Activated CD4-positive, alpha-beta memory T cell treated with anti-CD3 and anti-CD28 coated beads for 36 hours (primary cell): ENCODE measurements at regions of chr3 and their contacts with region 1.

Region 1: DNA sequence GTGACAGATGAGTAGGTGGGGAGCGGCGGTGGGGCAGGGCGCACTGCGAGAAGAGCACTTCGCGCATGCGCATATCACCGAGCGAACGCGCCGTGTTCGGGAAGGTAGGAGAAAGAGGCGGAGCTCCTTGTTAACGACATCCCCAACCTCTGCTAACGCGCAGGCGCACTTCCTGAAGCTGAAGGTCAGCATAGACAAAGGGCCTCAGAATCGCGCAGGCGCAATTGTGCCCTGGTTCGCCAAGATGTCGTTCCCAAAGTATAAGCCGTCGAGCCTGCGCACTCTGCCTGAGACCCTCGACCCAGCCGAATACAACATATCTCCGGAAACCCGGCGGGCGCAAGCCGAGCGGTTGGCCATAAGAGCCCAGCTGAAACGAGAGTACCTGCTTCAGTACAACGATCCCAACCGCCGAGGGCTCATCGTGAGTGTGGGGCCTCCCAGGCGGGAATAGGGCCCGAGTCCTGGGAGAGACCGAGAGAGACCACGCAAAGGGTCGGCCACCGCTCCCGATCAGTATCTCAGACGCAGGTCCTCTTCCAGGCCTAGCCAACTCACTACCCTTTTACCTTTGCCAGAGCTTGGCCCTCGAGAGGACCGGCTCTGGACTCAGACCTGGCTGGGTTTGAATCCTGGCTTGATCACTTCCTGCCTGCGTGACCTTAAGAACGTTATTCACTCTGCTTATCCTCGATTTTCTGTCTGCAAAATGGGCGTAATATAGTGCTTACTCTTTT is at the start of gene NDUFB4:
- DNase-seq: peak; percentile 97
- H3K4me3 Mint-ChIP-seq: peak within 1 kb of the TSS; percentile 87
- H3K27ac Mint-ChIP-seq: peak within 1 kb of the TSS; percentile 91
- H3K4me1 Mint-ChIP-seq: peaks cover 10% of the 10 kb centered on the region
- H3K27me3 Mint-ChIP-seq: peaks cover 2% of the 10 kb centered on the region
- total RNA-seq, gene NDUFB4: 130 to 143 TPM

Region 2: DNA sequence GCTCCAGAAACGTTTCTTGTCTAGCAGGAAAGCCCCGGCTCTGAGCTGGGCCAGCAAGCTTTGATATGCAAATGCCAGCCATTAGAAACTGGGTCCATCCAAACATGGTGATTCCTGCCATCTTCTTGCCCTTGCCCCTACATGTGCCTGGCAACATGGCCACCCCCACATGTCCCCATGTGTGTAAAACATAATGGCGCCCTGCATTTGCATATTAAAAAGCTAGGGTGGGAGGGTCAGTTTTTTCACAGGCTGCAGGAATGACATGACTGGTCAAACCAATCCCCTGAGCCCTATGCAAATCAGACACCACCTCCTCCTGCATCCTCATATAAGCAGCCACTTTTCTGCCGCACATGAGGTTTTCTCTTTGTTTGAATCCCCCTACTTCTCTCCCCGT is 332.5 kb before region 1 on chr3:
- CTCF ChIA-PET with region 1: no interaction called
- POLR2A ChIA-PET with region 1: no interaction called
- intact Hi-C with region 1: no loop called
- DNase-seq: no peak
- H3K4me3 Mint-ChIP-seq: no peak overlapping the region
- H3K27ac Mint-ChIP-seq: no peak overlapping the region
- H3K4me1 Mint-ChIP-seq: no peaks in the 10 kb centered on the region
- H3K27me3 Mint-ChIP-seq: no peaks in the 10 kb centered on the region

Region 3: GRCh38 chr3:120284747-120285507 is 311.4 kb before region 1 on chr3 and contains the start of gene GPR156:
- CTCF ChIA-PET with region 1: no interaction called
- POLR2A ChIA-PET with region 1: no interaction called
- intact Hi-C with region 1: no loop called
- DNase-seq: peak; percentile 11
- H3K4me3 Mint-ChIP-seq: peak within 1 kb of the TSS; percentile 7
- H3K27ac Mint-ChIP-seq: no peak within 1 kb of the TSS
- H3K4me1 Mint-ChIP-seq: peaks cover 3% of the 10 kb centered on the region
- H3K27me3 Mint-ChIP-seq: peaks cover 41% of the 10 kb centered on the region
- total RNA-seq, gene GPR156: not detected

Region 4: GRCh38 chr3:120524171-120524923 is 71.9 kb before region 1 on chr3:
- CTCF ChIA-PET with region 1: no interaction called
- POLR2A ChIA-PET with region 1: no interaction called
- intact Hi-C with region 1: loop called (anchors 1 kb)
- DNase-seq: no peak
- H3K4me3 Mint-ChIP-seq: no peak overlapping the region
- H3K27ac Mint-ChIP-seq: peak overlapping the region; percentile 40
- H3K4me1 Mint-ChIP-seq: peaks cover 15% of the 10 kb centered on the region
- H3K27me3 Mint-ChIP-seq: peaks cover 6% of the 10 kb centered on the region

Region 5: DNA sequence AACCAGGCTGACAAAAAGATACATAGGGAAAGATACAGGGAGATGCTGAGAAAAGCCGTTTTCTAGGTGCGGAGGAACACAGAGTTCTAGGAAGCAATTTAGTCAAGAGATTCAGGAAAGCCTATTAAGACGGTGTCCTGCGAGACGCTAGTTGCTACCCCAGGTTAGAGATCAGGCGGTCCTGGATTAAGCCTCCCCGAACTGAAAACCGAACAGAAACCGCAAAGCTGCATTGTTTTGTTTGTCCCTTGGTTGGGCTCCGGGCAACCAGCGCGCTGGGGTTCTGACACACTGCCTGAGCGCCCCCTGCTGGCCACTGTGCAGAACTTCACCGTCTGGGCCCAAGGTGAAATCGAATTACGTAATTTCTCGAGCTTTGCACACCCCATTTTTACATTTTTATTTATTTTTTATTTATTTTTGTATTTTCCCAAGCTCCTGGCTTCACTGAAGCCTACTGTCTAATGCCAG is 37.5 kb before region 1 on chr3:
- CTCF ChIA-PET with region 1: interaction called, 25 read pairs
- POLR2A ChIA-PET with region 1: interaction called, 4 read pairs
- intact Hi-C with region 1: loop called (anchors 1 kb)
- DNase-seq: peak; percentile 90
- H3K4me3 Mint-ChIP-seq: peak overlapping the region; percentile 73
- H3K27ac Mint-ChIP-seq: peak overlapping the region; percentile 30
- H3K4me1 Mint-ChIP-seq: peaks cover 15% of the 10 kb centered on the region
- H3K27me3 Mint-ChIP-seq: peaks cover 2% of the 10 kb centered on the region

Region 6: GRCh38 chr3:120622870-120623731 is 26.8 kb after region 1 on chr3:
- CTCF ChIA-PET with region 1: no interaction called
- POLR2A ChIA-PET with region 1: no interaction called
- intact Hi-C with region 1: no loop called
- DNase-seq: peak; percentile 20
- H3K4me3 Mint-ChIP-seq: no peak overlapping the region
- H3K27ac Mint-ChIP-seq: no peak overlapping the region
- H3K4me1 Mint-ChIP-seq: no peaks in the 10 kb centered on the region
- H3K27me3 Mint-ChIP-seq: peaks cover 2% of the 10 kb centered on the region

Region 7: DNA sequence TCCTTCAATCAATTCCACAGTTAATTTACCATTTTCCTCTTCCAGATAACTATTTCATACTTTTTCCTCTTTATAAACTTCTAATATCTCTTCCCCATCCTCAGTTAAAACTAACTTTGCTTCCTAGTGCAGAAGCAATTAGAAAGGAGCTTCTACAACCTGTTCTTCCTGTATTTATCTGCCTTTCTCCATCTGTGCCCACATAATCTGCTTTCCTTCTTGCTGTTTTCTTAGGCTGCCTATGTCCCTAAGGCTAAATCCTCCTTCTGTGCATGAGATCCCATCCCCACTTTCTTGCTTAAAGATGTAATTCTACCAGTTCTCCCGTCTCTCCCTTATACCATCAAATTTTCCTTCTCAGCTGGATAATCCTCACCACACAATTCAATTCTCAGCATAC is 114.1 kb after region 1 on chr3:
- CTCF ChIA-PET with region 1: no interaction called
- POLR2A ChIA-PET with region 1: no interaction called
- intact Hi-C with region 1: loop called (anchors 10 kb)
- DNase-seq: no peak
- H3K4me3 Mint-ChIP-seq: no peak overlapping the region
- H3K27ac Mint-ChIP-seq: no peak overlapping the region
- H3K4me1 Mint-ChIP-seq: peaks cover 6% of the 10 kb centered on the region
- H3K27me3 Mint-ChIP-seq: no peaks in the 10 kb centered on the region

Region 8: GRCh38 chr3:120742198-120742849 is 146.0 kb after region 1 on chr3 and contains the starts of genes GTF2E1 and RABL3:
- CTCF ChIA-PET with region 1: interaction called, 3 read pairs
- POLR2A ChIA-PET with region 1: interaction called, 19 read pairs
- intact Hi-C with region 1: loop called (anchors 1 kb)
- DNase-seq: peak; percentile 98
- H3K4me3 Mint-ChIP-seq: peak within 1 kb of the TSS; percentile 96
- H3K27ac Mint-ChIP-seq: peak within 1 kb of the TSS; percentile 94
- H3K4me1 Mint-ChIP-seq: peaks cover 28% of the 10 kb centered on the region
- H3K27me3 Mint-ChIP-seq: peaks cover 2% of the 10 kb centered on the region
- total RNA-seq, gene GTF2E1: 18.4 to 19.8 TPM
- total RNA-seq, gene RABL3: 28.7 to 30.0 TPM

Region 9: GRCh38 chr3:120795017-120795648 is 198.8 kb after region 1 on chr3:
- CTCF ChIA-PET with region 1: interaction called, 21 read pairs
- POLR2A ChIA-PET with region 1: no interaction called
- intact Hi-C with region 1: no loop called
- DNase-seq: peak; percentile 87
- H3K4me3 Mint-ChIP-seq: no peak overlapping the region
- H3K27ac Mint-ChIP-seq: no peak overlapping the region
- H3K4me1 Mint-ChIP-seq: peaks cover 6% of the 10 kb centered on the region
- H3K27me3 Mint-ChIP-seq: no peaks in the 10 kb centered on the region

Region 10: DNA sequence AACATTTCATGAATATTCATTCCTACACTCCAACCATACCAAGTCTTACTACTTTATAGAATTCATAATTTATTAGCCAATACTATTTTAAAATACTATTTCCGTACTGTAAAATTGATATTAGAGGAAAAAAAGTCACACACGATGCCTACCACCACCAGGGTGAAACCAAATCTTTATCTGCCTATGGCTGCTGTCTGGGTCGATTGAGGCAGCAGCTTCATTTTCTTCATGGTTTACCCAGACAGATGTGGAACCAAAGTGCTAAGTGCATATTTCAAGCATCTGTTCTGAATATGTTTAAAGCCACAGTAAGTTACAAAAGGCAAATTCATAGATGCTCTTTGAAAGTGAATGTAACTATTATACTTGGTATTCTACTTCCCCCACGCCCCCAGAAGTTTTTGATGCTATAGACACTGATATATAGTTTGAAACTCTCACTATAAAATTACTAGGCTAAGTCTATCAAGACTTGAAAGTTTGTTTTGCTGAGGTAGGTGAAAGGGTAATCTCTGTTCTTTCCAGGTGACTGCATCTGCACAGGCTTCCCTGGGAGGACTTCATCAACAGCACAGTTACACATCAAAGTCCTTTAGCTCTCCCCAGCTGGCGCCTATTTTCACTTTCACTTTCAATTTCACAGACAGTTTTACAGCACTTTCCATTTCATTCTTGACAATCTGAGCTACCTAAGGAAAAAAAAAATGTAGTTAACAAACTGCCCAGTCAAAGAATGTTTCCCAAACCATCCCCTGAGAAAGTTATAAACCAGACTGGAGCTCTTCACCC is 835.6 kb after region 1 on chr3:
- CTCF ChIA-PET with region 1: no interaction called
- POLR2A ChIA-PET with region 1: no interaction called
- intact Hi-C with region 1: loop called (anchors 2 kb)
- DNase-seq: peak; percentile 53
- H3K4me3 Mint-ChIP-seq: peak overlapping the region; percentile 6
- H3K27ac Mint-ChIP-seq: peak overlapping the region; percentile 38
- H3K4me1 Mint-ChIP-seq: peaks cover 14% of the 10 kb centered on the region
- H3K27me3 Mint-ChIP-seq: no peaks in the 10 kb centered on the region